Mammary epithelial cell (primary cell): ENCODE measurements at regions of chr10 and their contacts with region 1.

Region 1: DNA sequence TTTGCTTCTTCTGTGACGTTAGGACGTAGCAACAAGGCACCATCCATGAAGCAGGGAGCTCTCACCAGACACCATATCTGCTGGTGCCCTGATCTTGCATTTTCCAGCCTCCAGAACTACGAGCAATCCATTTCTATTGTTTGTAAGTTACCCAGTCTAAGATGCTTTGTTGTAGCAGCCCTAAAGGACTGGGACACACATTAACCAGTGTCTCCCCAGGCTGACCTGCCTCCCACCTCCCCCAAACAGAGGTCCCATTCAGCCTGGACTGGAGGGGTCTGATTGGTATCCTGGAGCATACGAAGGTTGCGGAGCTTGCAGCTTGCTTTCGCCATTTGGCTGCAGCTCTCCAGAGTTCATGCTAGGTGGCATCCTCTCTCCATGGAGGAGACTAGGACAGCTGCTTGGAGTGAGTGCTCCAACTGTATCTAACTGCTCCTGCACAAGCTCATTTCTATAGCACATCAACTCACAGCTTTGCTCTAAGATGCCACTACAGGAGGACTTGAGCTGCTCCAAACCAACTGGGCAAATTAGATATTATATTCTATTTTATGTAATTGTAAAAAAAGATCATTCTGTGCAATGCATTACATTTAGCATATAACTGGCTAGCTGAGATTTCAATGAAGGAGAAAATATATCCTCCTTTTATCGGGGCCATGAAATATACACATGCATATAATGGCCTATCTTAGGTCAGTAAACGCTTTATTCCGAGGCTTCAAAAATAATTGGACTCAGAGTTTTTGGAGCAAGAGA is 8.0 kb upstream of the GRK5 start:
- DNase-seq: peak; percentile 58
- H3K4me3 ChIP-seq: no peak overlapping the region
- H3K27ac ChIP-seq: no peak overlapping the region
- H3K4me1 ChIP-seq: peaks cover 40% of the 10 kb centered on the region
- H3K27me3 ChIP-seq: no peaks in the 10 kb centered on the region
- CTCF ChIP-seq: peak; percentile 77 to 82

Region 2: DNA sequence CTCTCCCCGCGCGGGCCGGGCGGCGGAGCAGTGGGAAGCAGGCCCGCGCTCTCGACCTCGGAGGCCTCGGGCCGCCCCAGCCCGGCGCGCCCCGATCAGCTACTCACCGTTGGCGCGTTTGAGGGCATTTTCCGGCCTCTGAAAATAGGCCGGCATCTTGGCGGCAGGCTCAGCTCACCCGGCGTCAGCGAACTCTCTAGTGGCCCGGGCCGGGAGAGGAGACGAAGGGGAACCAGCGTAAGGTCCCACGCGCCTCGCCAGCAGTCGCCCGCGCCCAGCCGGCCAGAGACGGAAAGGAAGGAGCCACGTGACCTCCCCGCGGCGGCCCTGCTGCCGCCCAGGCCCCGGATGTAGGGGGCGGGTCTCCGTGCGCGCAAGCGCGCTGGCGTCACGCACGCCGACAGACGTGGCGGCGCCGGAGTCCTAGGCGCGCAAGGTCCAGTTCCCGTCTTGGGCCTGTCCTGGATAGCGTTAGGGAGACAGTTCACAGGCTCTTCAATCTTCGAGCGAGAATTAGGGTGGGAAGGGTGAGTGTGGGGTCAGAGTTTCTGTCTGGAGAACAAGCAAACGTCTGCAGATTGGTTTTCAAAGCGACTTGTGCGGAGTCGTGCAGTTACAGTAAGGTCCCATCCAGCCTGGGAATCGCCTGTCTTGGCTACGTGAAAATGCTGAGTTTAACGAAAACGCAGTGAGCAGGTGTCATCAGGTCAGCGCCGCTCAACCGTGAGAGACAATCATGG is 118.7 kb before region 1 on chr10 and contains the start of gene EIF3A:
- CTCF ChIA-PET with region 1: no interaction called
- dilution Hi-C with region 1: no loop called
- in situ Hi-C with region 1: no loop called
- intact Hi-C with region 1: loop called (anchors 1 kb)
- DNase-seq: peak; percentile 91
- H3K4me3 ChIP-seq: peak within 1 kb of the TSS; percentile 71 to 97 (median 85)
- H3K27ac ChIP-seq: peak within 1 kb of the TSS; percentile 93
- H3K4me1 ChIP-seq: peaks cover 8% of the 10 kb centered on the region
- H3K27me3 ChIP-seq: no peaks in the 10 kb centered on the region
- CTCF ChIP-seq: no peak
- total RNA-seq, gene EIF3A: 115 to 170 TPM

Region 3: DNA sequence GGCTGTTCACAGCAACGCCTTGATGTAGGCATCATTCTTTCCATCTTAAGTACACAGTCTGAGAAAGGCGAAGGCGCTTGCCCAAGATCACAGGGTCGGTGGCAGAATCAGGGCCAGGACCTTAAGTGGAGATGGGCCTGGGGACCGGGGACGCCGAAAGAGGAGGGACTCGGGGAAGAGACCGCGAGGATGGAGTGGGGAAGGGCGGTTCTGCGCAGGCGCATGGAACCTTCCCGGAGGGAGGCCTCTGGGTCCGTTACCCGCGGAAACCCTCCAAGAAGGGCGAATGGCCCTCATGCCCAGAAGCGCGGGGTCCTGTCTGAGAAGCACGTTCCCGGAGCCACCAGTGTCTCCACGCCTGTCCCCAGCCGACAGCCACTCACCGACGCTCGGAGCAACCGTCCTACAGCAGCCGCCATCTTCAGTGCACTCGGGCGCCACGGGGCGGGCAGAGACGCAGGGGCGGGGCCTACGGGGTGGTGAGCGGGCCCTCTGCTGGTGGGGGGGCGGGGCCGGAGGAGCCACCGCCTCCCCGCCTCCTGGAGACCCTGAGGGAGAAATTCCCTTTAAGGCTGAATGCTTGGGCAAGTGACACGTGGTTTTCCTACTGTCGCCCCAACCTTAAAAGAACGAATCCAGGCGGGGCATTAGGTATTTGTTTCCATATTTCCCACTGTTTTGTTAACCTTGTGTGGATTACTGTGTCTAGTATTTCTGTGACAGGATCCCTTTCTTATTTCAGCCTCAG is 20.9 kb before region 1 on chr10 and contains the start of gene PRDX3:
- CTCF ChIA-PET with region 1: no interaction called
- dilution Hi-C with region 1: no loop called
- in situ Hi-C with region 1: no loop called
- intact Hi-C with region 1: loop called (anchors 2 kb)
- DNase-seq: peak; percentile 84
- H3K4me3 ChIP-seq: peak within 1 kb of the TSS; percentile 67 to 100 (median 88)
- H3K27ac ChIP-seq: peak within 1 kb of the TSS; percentile 52
- H3K4me1 ChIP-seq: peaks cover 10% of the 10 kb centered on the region
- H3K27me3 ChIP-seq: no peaks in the 10 kb centered on the region
- CTCF ChIP-seq: peak in 1 of 2 donors; percentile 15
- total RNA-seq, gene PRDX3: 96.6 to 125 TPM

Region 4: DNA sequence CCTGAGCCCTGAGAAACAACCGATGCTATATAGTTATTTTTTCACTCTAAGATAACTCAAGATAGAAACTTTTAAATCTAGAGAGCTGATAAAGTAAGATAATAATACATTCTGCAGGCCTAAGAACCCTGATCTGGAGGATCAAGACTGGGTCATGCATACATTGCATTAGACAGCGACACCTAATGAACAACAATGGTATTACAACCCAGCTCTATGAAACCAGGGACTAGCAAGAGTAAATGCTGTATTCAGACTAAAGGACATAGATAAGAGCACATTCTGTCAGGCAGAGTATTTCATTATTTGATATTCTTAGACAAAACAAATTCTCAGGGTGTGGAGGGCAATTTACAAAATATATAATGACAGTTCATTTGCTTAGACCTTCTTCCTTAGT is 156.5 kb after region 1 on chr10:
- CTCF ChIA-PET with region 1: no interaction called
- dilution Hi-C with region 1: no loop called
- in situ Hi-C with region 1: no loop called
- intact Hi-C with region 1: no loop called
- DNase-seq: no peak
- H3K4me3 ChIP-seq: no peak overlapping the region
- H3K27ac ChIP-seq: no peak overlapping the region
- H3K4me1 ChIP-seq: no peaks in the 10 kb centered on the region
- H3K27me3 ChIP-seq: no peaks in the 10 kb centered on the region
- CTCF ChIP-seq: peak; percentile 37 to 43

Region 5: GRCh38 chr10:119445311-119445934 is 246.0 kb after region 1 on chr10:
- CTCF ChIA-PET with region 1: interaction called, 14 read pairs
- dilution Hi-C with region 1: no loop called
- in situ Hi-C with region 1: no loop called
- intact Hi-C with region 1: loop called (anchors 1 kb)
- DNase-seq: peak; percentile 50
- H3K4me3 ChIP-seq: no peak overlapping the region
- H3K27ac ChIP-seq: no peak overlapping the region
- H3K4me1 ChIP-seq: peaks cover 17% of the 10 kb centered on the region
- H3K27me3 ChIP-seq: no peaks in the 10 kb centered on the region
- CTCF ChIP-seq: peak; percentile 84 to 94

Region 6: GRCh38 chr10:119650692-119651513 is 451.5 kb after region 1 on chr10 and contains the start of gene BAG3:
- CTCF ChIA-PET with region 1: no interaction called
- dilution Hi-C with region 1: no loop called
- in situ Hi-C with region 1: no loop called
- intact Hi-C with region 1: loop called (anchors 5 kb)
- DNase-seq: peak; percentile 92
- H3K4me3 ChIP-seq: peak within 1 kb of the TSS; percentile 95 to 97 (median 96)
- H3K27ac ChIP-seq: peak within 1 kb of the TSS; percentile 77
- H3K4me1 ChIP-seq: peaks cover 24% of the 10 kb centered on the region
- H3K27me3 ChIP-seq: no peaks in the 10 kb centered on the region
- CTCF ChIP-seq: no peak
- total RNA-seq, gene BAG3: 41.0 to 117 TPM